Activated B cell treated with CpG ODN at 0.5 μM for 24 hours (primary cell): ENCODE measurements at regions of chr2 and their contacts with region 1.

Region 1: GRCh38 chr2:171416009-171416926 is 17.5 kb downstream of the METTL8 start:
- DNase-seq: peak; percentile 52
- ATAC-seq: peak; percentile 97
- H3K4me3 Mint-ChIP-seq: peak overlapping the region; percentile 3
- H3K27ac Mint-ChIP-seq: peak overlapping the region; percentile 82
- H3K4me1 Mint-ChIP-seq: peaks cover 19% of the 10 kb centered on the region
- H3K27me3 Mint-ChIP-seq: no peaks in the 10 kb centered on the region
- CTCF ChIP-seq: peak; percentile 94

Region 2: GRCh38 chr2:171056307-171056706 is 360.0 kb before region 1 on chr2:
- CTCF ChIA-PET with region 1: no interaction called
- POLR2A ChIA-PET with region 1: no interaction called
- intact Hi-C with region 1: loop called (anchors 5 kb)
- DNase-seq: no peak
- ATAC-seq: no peak
- H3K4me3 Mint-ChIP-seq: no peak overlapping the region
- H3K27ac Mint-ChIP-seq: no peak overlapping the region
- H3K4me1 Mint-ChIP-seq: no peaks in the 10 kb centered on the region
- H3K27me3 Mint-ChIP-seq: no peaks in the 10 kb centered on the region
- CTCF ChIP-seq: no peak

Region 3: GRCh38 chr2:171086352-171087290 is 329.6 kb before region 1 on chr2:
- CTCF ChIA-PET with region 1: interaction called, 24 read pairs
- POLR2A ChIA-PET with region 1: no interaction called
- intact Hi-C with region 1: loop called (anchors 2 kb)
- DNase-seq: no peak
- ATAC-seq: peak; percentile 57
- H3K4me3 Mint-ChIP-seq: no peak overlapping the region
- H3K27ac Mint-ChIP-seq: peak overlapping the region; percentile 7
- H3K4me1 Mint-ChIP-seq: peaks cover 36% of the 10 kb centered on the region
- H3K27me3 Mint-ChIP-seq: no peaks in the 10 kb centered on the region
- CTCF ChIP-seq: peak; percentile 67

Region 4: GRCh38 chr2:171260471-171261424 is 155.5 kb before region 1 on chr2:
- CTCF ChIA-PET with region 1: interaction called, 17 read pairs
- POLR2A ChIA-PET with region 1: no interaction called
- intact Hi-C with region 1: loop called (anchors 2 kb)
- DNase-seq: no peak
- ATAC-seq: peak; percentile 52
- H3K4me3 Mint-ChIP-seq: peak overlapping the region; percentile 5
- H3K27ac Mint-ChIP-seq: peak overlapping the region; percentile 82
- H3K4me1 Mint-ChIP-seq: peaks cover 25% of the 10 kb centered on the region
- H3K27me3 Mint-ChIP-seq: no peaks in the 10 kb centered on the region
- CTCF ChIP-seq: no peak

Region 5: GRCh38 chr2:171319164-171319810 is 97.0 kb before region 1 on chr2:
- CTCF ChIA-PET with region 1: interaction called, 13 read pairs
- POLR2A ChIA-PET with region 1: interaction called, 34 read pairs
- intact Hi-C with region 1: loop called (anchors 1 kb)
- DNase-seq: no peak
- ATAC-seq: peak; percentile 61
- H3K4me3 Mint-ChIP-seq: peak overlapping the region; percentile 80
- H3K27ac Mint-ChIP-seq: peak overlapping the region; percentile 92
- H3K4me1 Mint-ChIP-seq: peaks cover 74% of the 10 kb centered on the region
- H3K27me3 Mint-ChIP-seq: no peaks in the 10 kb centered on the region
- CTCF ChIP-seq: no peak

Region 6: GRCh38 chr2:171325886-171326585 is 90.2 kb before region 1 on chr2:
- CTCF ChIA-PET with region 1: interaction called, 10 read pairs
- POLR2A ChIA-PET with region 1: interaction called, 34 read pairs
- intact Hi-C with region 1: loop called (anchors 1 kb)
- DNase-seq: no peak
- ATAC-seq: peak; percentile 64
- H3K4me3 Mint-ChIP-seq: peak overlapping the region; percentile 82
- H3K27ac Mint-ChIP-seq: peak overlapping the region; percentile 92
- H3K4me1 Mint-ChIP-seq: peaks cover 87% of the 10 kb centered on the region
- H3K27me3 Mint-ChIP-seq: no peaks in the 10 kb centered on the region
- CTCF ChIP-seq: no peak

Region 7: DNA sequence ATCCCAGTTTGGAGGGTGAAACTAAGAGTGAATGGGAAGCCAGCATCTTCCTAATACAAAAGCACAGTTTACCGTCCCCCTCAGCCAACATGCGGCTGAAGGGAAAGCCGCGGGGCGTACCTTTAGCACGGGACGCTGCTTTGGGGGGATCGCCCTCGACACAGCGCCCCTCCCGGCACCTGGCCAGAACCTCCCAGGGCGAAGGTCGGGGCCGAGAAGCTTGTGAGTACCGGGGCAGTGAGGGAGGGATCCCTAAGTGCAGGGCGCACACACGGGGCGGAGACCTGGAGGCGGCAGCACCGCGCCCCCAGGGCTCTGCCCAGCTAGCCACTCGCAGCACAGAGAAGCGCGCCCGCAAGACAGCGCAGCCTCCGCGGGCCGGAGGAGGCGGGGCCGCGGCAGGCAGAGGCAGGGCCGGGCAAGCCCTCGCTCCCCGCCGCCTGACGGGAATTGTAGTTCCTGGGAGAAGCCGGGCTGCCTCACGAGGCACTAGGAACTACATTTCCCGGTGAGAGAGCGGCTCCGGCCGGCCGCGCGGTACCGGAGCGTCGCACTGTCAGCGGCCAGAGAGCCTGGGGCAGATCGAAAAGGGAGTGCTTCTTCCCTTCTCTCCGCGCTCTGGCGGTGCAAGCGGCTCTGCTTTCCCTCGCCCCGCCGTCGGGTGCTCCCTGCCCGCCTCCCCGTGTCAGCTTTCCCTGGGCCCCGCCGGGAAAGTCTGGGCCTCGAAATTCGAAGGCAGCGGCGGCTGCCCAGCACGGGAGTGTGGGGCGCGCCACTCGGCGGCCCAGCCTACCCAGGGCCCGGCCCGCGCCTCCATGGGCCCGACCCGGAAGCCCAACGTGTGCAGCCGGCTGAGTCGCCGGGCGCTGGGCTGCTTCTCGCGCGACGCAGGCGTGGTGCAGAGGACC is 17.7 kb after region 1 on chr2 and contains the starts of genes DCAF17 and METTL8:
- CTCF ChIA-PET with region 1: interaction called, 5 read pairs
- POLR2A ChIA-PET with region 1: interaction called, 16 read pairs
- intact Hi-C with region 1: no loop called
- DNase-seq: peak; percentile 91
- ATAC-seq: peak; percentile 92
- H3K4me3 Mint-ChIP-seq: peak within 1 kb of the TSS; percentile 90
- H3K27ac Mint-ChIP-seq: peak within 1 kb of the TSS; percentile 94
- H3K4me1 Mint-ChIP-seq: peaks cover 24% of the 10 kb centered on the region
- H3K27me3 Mint-ChIP-seq: no peaks in the 10 kb centered on the region
- CTCF ChIP-seq: no peak
- total RNA-seq, gene DCAF17: 23.1 and 23.5 TPM in 2 replicates
- total RNA-seq, gene METTL8: 16.5 and 22.9 TPM in 2 replicates

Region 8: DNA sequence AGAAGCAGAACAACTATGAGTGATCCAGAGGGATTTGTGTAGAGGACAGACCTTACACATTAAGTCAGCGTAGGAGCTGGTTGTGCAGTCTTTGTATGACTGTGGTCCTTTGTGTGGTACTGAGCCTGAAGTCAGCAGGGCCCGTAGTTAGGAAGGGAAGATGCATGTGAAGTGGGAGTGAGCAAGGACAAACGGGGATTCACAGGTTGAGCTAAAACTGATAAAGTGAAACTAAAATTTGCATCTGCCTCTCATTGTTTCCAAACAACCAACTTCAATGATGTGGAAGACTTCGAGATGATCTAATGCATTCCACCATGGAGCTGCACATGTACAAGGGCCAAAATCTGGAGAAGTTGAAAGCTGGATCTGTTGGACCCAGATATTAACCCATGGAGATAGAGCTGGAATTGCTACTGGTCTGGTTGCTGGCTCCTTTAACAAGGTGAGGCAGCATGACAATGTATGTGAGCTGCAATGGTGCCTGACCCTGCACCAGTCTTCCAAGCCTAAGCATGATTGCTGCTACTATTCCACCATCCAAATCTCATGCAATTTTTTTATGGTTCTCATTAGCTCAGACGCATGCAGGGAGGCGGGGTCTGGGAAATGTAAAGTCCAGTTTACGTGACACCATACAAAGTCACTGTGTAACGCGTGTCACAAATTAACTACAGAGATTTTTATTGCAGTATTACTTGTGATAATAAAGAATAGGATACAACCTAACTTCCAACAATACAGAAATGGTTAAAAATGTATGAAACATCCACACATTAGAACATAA is 93.9 kb after region 1 on chr2:
- CTCF ChIA-PET with region 1: no interaction called
- POLR2A ChIA-PET with region 1: no interaction called
- intact Hi-C with region 1: no loop called
- DNase-seq: no peak
- ATAC-seq: no peak
- H3K4me3 Mint-ChIP-seq: no peak overlapping the region
- H3K27ac Mint-ChIP-seq: no peak overlapping the region
- H3K4me1 Mint-ChIP-seq: peaks cover 13% of the 10 kb centered on the region
- H3K27me3 Mint-ChIP-seq: no peaks in the 10 kb centered on the region
- CTCF ChIP-seq: no peak